ENCODE measurements at regions of chr10 and their contacts with region 1.

Region 1: GRCh38 chr10:94279835-94280709 is 82.7 kb downstream of the NOC3L start:
- DNase-seq: no peak
- H3K4me3 ChIP-seq: no peak overlapping the region
- H3K27ac ChIP-seq: peak overlapping the region; percentile 1 to 47 (median 40)
- H3K4me1 ChIP-seq: peaks cover 11 to 38% (median 28%) of the 10 kb centered on the region in 4 donors
- H3K27me3 ChIP-seq: no peaks in the 10 kb centered on the region
- CTCF ChIP-seq: peak; percentile 66 to 88 (median 72)
- EP300 ChIP-seq: no peak
- POLR2A ChIP-seq: no peak

Region 2: GRCh38 chr10:94315024-94315451 is 35.0 kb after region 1 on chr10:
- intact Hi-C with region 1: loop called (anchors 5 kb)
- DNase-seq: no peak
- H3K4me3 ChIP-seq: no peak overlapping the region
- H3K27ac ChIP-seq: peak overlapping the region; percentile 50 to 79 (median 72)
- H3K4me1 ChIP-seq: peaks cover 8 to 51% (median 44%) of the 10 kb centered on the region in 4 donors
- H3K27me3 ChIP-seq: no peaks in the 10 kb centered on the region
- CTCF ChIP-seq: no peak
- EP300 ChIP-seq: no peak
- POLR2A ChIP-seq: no peak

Measured in esophagus muscularis mucosa (tissue), 4 donors.